Sciatic nerve (tissue), 2 donors: ENCODE measurements at regions of chr17 and their contacts with region 1.

Region 1: GRCh38 chr17:45780921-45781320 is 3.2 kb upstream of the CRHR1 start:
- DNase-seq: no peak
- ATAC-seq: peak; percentile 6

Region 2: GRCh38 chr17:45801421-45801820 is 20.5 kb after region 1 on chr17:
- intact Hi-C with region 1: loop called (anchors 2 kb)
- DNase-seq: no peak
- ATAC-seq: no peak

Region 3: GRCh38 chr17:45894022-45894784 is 113.3 kb after region 1 on chr17 and contains the start of gene MAPT:
- intact Hi-C with region 1: no loop called
- DNase-seq: peak; percentile 93
- ATAC-seq: peak; percentile 96
- total RNA-seq, gene MAPT: 4.8 TPM

Region 4: DNA sequence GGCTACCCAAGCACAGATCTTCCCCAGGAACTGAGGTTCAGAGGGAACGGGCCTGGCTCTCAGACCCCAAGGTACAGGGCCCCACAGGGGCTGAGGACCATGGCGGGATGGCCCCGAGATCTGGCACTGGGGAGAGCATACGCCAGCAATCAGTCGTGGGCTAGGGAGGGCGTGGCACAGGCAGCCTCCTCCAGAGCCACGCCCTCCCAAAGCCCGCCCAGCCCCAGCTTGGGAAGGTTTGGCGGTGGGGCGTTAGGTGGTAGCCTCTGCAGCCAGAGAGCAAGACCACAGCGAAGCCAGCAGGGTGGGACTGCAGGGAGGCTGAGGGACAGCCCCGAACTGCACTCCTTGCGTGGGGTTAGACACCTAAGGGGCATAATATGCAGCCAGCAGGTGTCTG is 1082.0 kb after region 1 on chr17:
- intact Hi-C with region 1: no loop called
- DNase-seq: no peak
- ATAC-seq: no peak

Region 5: DNA sequence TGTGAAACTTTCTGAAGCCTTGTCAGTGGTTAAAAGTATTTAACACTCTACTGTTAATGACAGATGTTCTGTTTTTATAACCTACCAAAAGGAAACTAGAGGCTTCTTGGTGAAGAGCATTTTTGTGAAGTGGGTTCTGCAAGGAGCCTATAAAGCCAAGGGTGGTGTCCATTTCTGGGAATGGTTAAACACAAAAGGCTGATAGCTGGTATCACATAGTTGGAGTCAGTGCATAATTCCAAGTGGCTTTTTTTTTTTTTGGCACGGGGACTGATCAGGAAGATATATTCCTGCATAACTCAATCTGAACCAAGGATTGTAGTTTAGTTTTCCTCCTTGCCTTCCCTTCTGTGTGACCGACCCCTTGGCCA is 1841.2 kb after region 1 on chr17:
- intact Hi-C with region 1: no loop called
- DNase-seq: no peak
- ATAC-seq: no peak